ENCODE measurements at regions of chr17 and their contacts with region 1.

Region 1: GRCh38 chr17:82648166-82648668 is at the start of gene WDR45B:
- DNase-seq: peak; percentile 86
- H3K4me3 Mint-ChIP-seq: peak within 1 kb of the TSS; percentile 84
- H3K27ac Mint-ChIP-seq: peak within 1 kb of the TSS; percentile 71
- H3K4me1 Mint-ChIP-seq: peaks cover 10% of the 10 kb centered on the region
- H3K27me3 Mint-ChIP-seq: no peaks in the 10 kb centered on the region
- total RNA-seq, gene WDR45B: 63.1 and 66.9 TPM in 2 replicates

Region 2: DNA sequence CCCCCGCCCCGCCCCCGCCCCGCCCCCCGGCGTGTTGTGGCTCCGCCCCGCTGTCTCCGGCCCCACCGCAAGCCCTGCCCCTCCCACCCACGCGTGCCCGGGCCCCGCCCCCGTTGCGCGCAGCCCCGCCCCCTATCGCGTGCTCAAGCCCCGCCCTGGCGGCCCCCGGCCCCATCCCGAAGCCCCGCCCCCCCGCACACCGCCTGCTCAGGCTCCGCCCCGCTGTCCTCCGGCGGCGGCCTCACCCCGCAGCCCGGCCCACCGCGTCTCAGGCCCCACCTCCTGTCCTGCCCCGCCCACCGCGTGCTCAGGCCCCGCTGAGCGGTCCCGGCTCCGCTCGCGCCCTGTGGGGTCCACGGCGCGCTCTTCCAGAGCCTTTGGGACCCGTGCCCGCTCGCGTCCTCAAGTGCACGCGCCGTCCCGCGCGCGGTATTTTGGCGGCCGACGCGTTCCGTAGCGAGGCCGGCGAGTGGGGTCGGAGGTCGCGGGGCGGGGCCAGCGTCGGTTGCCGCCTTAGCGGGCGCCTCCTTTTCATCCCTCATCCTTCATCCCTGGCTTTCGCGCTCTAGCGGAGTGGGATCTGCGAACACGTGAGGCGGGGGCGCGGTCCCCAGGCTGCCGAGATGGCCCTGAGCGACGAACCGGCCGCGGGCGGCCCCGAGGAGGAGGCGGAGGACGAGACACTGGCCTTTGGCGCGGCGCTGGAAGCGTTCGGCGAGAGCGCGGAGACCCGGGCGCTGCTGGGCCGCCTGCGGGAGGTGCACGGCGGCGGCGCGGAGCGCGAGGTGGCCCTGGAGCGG is 103.6 kb after region 1 on chr17 and contains the start of gene TBCD:
- intact Hi-C with region 1: loop called (anchors 1 kb)
- DNase-seq: peak; percentile 82
- H3K4me3 Mint-ChIP-seq: peak within 1 kb of the TSS; percentile 86
- H3K27ac Mint-ChIP-seq: peak within 1 kb of the TSS; percentile 58
- H3K4me1 Mint-ChIP-seq: peaks cover 20% of the 10 kb centered on the region
- H3K27me3 Mint-ChIP-seq: no peaks in the 10 kb centered on the region
- total RNA-seq, gene TBCD: 120 and 125 TPM in 2 replicates

Region 3: GRCh38 chr17:83051395-83052233 is 403.4 kb after region 1 on chr17:
- intact Hi-C with region 1: loop called (anchors 5 kb)
- DNase-seq: peak; percentile 97
- H3K4me3 Mint-ChIP-seq: peak overlapping the region; percentile 77
- H3K27ac Mint-ChIP-seq: peak overlapping the region; percentile 83
- H3K4me1 Mint-ChIP-seq: peaks cover 33% of the 10 kb centered on the region
- H3K27me3 Mint-ChIP-seq: no peaks in the 10 kb centered on the region